Natural killer cell (primary cell): ENCODE measurements at regions of chr15 and their contacts with region 1.

Region 1: GRCh38 chr15:69452692-69453521 is at the start of gene RPLP1:
- DNase-seq: peak; percentile 96 to 99
- ATAC-seq: peak; percentile 84 to 94 (median 90)
- H3K4me3 ChIP-seq: peak within 1 kb of the TSS; percentile 83
- H3K4me3 Mint-ChIP-seq: peak within 1 kb of the TSS; percentile 98
- H3K27ac ChIP-seq: peak within 1 kb of the TSS; percentile 83
- H3K27ac Mint-ChIP-seq: peak within 1 kb of the TSS; percentile 98 to 100
- H3K4me1 ChIP-seq: peaks cover 23% of the 10 kb centered on the region
- H3K4me1 Mint-ChIP-seq: peaks cover 41 to 45% of the 10 kb centered on the region in 2 donors
- H3K27me3 ChIP-seq: no peaks in the 10 kb centered on the region
- H3K27me3 Mint-ChIP-seq: no peaks in the 10 kb centered on the region
- CTCF ChIP-seq: no peak
- total RNA-seq, gene RPLP1: 895 to 1,167 (median 974) TPM

Region 2: GRCh38 chr15:68795298-68795848 is 657.5 kb before region 1 on chr15:
- intact Hi-C with region 1: loop called (anchors 5 kb)
- DNase-seq: peak; percentile 75 to 79
- ATAC-seq: peak; percentile 62 to 85 (median 63)
- H3K4me3 ChIP-seq: peak overlapping the region; percentile 6
- H3K4me3 Mint-ChIP-seq: peak overlapping the region; percentile 92
- H3K27ac ChIP-seq: peak overlapping the region; percentile 45
- H3K27ac Mint-ChIP-seq: peak overlapping the region; percentile 88 to 94
- H3K4me1 ChIP-seq: peaks cover 92% of the 10 kb centered on the region
- H3K4me1 Mint-ChIP-seq: peaks cover 96 to 98% of the 10 kb centered on the region in 2 donors
- H3K27me3 ChIP-seq: no peaks in the 10 kb centered on the region
- H3K27me3 Mint-ChIP-seq: no peaks in the 10 kb centered on the region
- CTCF ChIP-seq: no peak

Region 3: DNA sequence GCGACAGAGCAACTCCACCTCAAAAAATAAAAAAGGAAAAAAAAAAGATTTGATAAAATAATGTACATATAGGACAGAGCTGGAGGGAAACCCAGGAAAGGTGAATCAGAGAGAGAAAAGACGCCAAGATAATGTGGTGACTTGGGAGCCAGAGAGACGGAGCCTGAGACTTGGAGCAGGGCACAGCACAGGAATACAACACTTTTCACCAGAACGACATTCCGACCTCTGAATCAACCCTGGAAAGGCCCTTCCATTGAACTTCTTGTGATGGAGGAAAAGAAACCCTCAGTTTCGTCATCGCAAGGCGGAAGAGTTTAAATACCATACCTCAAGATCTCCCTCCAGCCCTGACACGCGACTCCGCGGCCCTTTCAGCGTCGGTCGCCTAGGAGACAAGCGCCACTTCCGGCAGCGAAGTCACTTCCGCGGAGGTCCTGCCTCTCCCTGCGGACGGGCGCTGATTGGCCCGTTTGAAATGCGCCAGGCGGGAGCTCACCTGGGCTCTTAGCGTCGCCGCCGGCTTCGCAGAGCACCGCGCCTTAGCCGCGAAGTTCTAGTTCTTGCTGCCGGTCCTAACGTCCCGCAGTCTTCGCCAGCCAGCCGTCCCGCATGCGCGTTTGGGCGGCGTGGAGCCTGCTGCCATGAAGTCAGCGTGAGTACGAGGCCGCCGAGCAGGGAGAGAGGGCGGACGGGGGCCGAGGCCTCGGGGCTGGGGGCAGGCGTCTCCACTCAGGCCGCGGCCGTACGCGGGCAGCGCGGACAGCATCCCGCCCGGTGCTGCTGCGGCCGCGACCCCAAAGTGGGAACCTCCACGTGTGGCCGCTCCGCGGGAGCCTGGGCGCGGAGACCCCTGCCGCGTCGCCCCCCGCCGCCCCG is 38.8 kb before region 1 on chr15 and contains the start of gene KIF23:
- intact Hi-C with region 1: loop called (anchors 1 kb)
- DNase-seq: peak; percentile 86 to 98
- ATAC-seq: peak; percentile 94 to 98 (median 98)
- H3K4me3 ChIP-seq: peak within 1 kb of the TSS; percentile 89
- H3K4me3 Mint-ChIP-seq: peak within 1 kb of the TSS; percentile 79
- H3K27ac ChIP-seq: no peak within 1 kb of the TSS
- H3K27ac Mint-ChIP-seq: peak within 1 kb of the TSS; percentile 44 to 77
- H3K4me1 ChIP-seq: peaks cover 11% of the 10 kb centered on the region
- H3K4me1 Mint-ChIP-seq: peaks cover 5 to 10% of the 10 kb centered on the region in 2 donors
- H3K27me3 ChIP-seq: peaks cover 2% of the 10 kb centered on the region
- H3K27me3 Mint-ChIP-seq: peaks cover 0 to 4% of the 10 kb centered on the region in 2 donors
- CTCF ChIP-seq: no peak
- total RNA-seq, gene KIF23: 1.2 to 2.1 (median 1.9) TPM

Region 4: GRCh38 chr15:69697916-69698315 is 245.0 kb after region 1 on chr15:
- intact Hi-C with region 1: no loop called
- DNase-seq: no peak
- ATAC-seq: no peak
- H3K4me3 ChIP-seq: no peak overlapping the region
- H3K4me3 Mint-ChIP-seq: no peak overlapping the region
- H3K27ac ChIP-seq: no peak overlapping the region
- H3K27ac Mint-ChIP-seq: no peak overlapping the region
- H3K4me1 ChIP-seq: peaks cover 3% of the 10 kb centered on the region
- H3K4me1 Mint-ChIP-seq: peaks cover 0 to 11% of the 10 kb centered on the region in 2 donors
- H3K27me3 ChIP-seq: no peaks in the 10 kb centered on the region
- H3K27me3 Mint-ChIP-seq: peaks cover 13 to 15% of the 10 kb centered on the region in 2 donors
- CTCF ChIP-seq: no peak